WTC11 (cell line): ENCODE measurements at regions of chr3 and their contacts with region 1.

Region 1: GRCh38 chr3:44125882-44126281 is 115.8 kb upstream of the TOPAZ1 start:
- DNase-seq: no peak
- ATAC-seq: no peak
- H3K4me3 Mint-ChIP-seq: no peak overlapping the region
- H3K27ac Mint-ChIP-seq: no peak overlapping the region
- H3K4me1 Mint-ChIP-seq: peaks cover 23% of the 10 kb centered on the region
- H3K27me3 Mint-ChIP-seq: peaks cover 15% of the 10 kb centered on the region
- CTCF ChIP-seq: no peak

Region 2: GRCh38 chr3:44114142-44114541 is 11.7 kb before region 1 on chr3:
- CTCF ChIA-PET with region 1: interaction called, 10 read pairs
- POLR2A ChIA-PET with region 1: no interaction called
- DNase-seq: peak; percentile 86
- ATAC-seq: peak; percentile 94
- H3K4me3 Mint-ChIP-seq: no peak overlapping the region
- H3K27ac Mint-ChIP-seq: no peak overlapping the region
- H3K4me1 Mint-ChIP-seq: peaks cover 11% of the 10 kb centered on the region
- H3K27me3 Mint-ChIP-seq: peaks cover 7% of the 10 kb centered on the region
- CTCF ChIP-seq: peak; percentile 64